ENCODE measurements at regions of chr2 and their contacts with region 1.

Region 1: DNA sequence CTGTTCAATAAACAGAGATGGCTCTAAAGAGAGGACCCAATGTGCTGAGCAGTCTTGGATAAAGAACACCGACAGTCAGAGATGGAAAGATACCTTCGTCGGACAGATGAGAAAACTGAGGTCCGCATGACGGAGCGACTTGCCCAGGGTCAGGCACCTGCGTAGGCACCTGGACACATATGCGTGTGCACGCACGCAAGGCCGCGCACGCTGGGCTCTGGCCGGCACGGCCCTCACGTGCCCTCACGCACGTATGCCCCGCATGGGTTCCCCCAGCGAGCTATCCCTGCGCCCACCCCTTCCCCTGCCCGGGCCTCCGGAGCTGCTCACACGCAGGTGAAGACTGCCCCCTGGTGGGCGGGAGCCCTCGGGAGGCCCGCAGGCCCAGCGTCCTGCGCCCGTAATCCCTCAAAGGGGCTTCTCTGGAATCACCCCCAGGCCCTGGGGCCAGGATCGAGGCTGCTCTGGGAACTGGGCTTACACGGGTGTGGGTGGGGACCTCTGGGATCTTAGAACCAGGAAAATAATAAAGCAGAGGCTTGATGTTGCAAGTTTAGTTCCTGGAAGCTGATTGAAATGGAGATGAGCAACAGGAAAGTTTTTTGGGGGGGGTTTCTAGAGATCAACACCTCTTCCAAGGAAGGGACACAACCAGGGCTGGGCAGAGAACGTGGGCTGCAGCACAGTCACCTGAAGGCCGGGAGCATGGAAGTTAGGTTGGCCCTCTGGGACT is 246.3 kb downstream of the TNS1 start:
- DNase-seq: peak in 1 of 2 experiments; percentile 49
- H3K4me3 ChIP-seq: no peak overlapping the region
- H3K27ac ChIP-seq: no peak overlapping the region
- H3K4me1 ChIP-seq: no peaks in the 10 kb centered on the region
- H3K27me3 ChIP-seq: 0 out of 2 replicates have a peak, but pooled peaks cover 4% of the 10 kb centered on the region
- CTCF ChIP-seq: peak; percentile 79

Region 2: GRCh38 chr2:216519154-216519762 is 1237.3 kb before region 1 on chr2:
- CTCF ChIA-PET with region 1: no interaction called
- POLR2A ChIA-PET with region 1: no interaction called
- intact Hi-C with region 1: loop called (anchors 5 kb)
- DNase-seq: peak; percentile 53 to 64
- H3K4me3 ChIP-seq: no peak overlapping the region
- H3K27ac ChIP-seq: no peak overlapping the region
- H3K4me1 ChIP-seq: 0 out of 2 replicates have a peak, but pooled peaks cover 3% of the 10 kb centered on the region
- H3K27me3 ChIP-seq: no peaks in the 10 kb centered on the region
- CTCF ChIP-seq: peak; percentile 86

Region 3: DNA sequence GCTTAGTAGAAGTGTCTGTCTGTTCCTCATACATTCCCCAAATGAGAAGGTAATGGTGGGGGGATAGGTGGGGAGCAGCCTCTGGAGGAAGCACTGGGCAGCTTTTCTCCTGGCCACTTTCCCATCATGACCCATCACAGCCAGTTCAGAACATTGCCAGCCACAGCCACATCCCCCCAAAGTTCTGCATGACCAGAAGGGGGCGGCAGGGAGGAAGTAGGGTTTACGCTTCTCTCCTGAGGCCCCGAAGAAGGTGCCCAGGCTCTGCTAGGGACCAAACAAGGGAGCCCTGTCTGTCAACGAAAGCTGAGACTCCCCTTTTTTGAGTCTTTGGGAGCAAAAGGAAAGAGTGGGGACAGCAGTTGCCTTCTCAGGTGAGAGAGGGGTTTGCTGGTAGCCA is 1068.9 kb before region 1 on chr2:
- CTCF ChIA-PET with region 1: no interaction called
- POLR2A ChIA-PET with region 1: no interaction called
- intact Hi-C with region 1: loop called (anchors 5 kb)
- DNase-seq: no peak
- H3K4me3 ChIP-seq: no peak overlapping the region
- H3K27ac ChIP-seq: no peak overlapping the region
- H3K4me1 ChIP-seq: peaks cover 5% of the 10 kb centered on the region; the same call in 1 of the 2 replicates
- H3K27me3 ChIP-seq: no peaks in the 10 kb centered on the region
- CTCF ChIP-seq: no peak; the same call in 1 of the 2 replicates

Measured in PC-9 (cell line).